ENCODE measurements at regions of chr11 and their contacts with region 1.

Region 1: GRCh38 chr11:61361686-61362541 is at the starts of genes CYB561A3 and TMEM138:
- DNase-seq: peak; percentile 88
- ATAC-seq: peak; percentile 92
- H3K4me3 ChIP-seq: peak within 1 kb of the TSS; percentile 89 to 93
- H3K27ac ChIP-seq: peak within 1 kb of the TSS; percentile 97
- H3K4me1 ChIP-seq: peaks cover 0 to 22% of the 10 kb centered on the region in 2 experiments; a peak in 2 of 4 replicates
- H3K27me3 ChIP-seq: no peaks in the 10 kb centered on the region
- CTCF ChIP-seq: no peak
- POLR2A ChIP-seq: peak; percentile 92
- RAD21 ChIP-seq: no peak
- total RNA-seq, gene CYB561A3: 34.1 TPM
- total RNA-seq, gene TMEM138: 45.0 TPM

Region 2: GRCh38 chr11:61294717-61295595 is 67.0 kb before region 1 on chr11 and contains the start of gene VWCE:
- CTCF ChIA-PET with region 1: no interaction called
- POLR2A ChIA-PET with region 1: no interaction called
- RAD21 ChIA-PET with region 1: no interaction called
- intact Hi-C with region 1: no loop called
- DNase-seq: no peak
- ATAC-seq: peak; percentile 54
- H3K4me3 ChIP-seq: no peak within 1 kb of the TSS
- H3K27ac ChIP-seq: no peak within 1 kb of the TSS
- H3K4me1 ChIP-seq: no peaks in the 10 kb centered on the region
- H3K27me3 ChIP-seq: no peaks in the 10 kb centered on the region
- CTCF ChIP-seq: no peak
- POLR2A ChIP-seq: no peak
- RAD21 ChIP-seq: no peak
- total RNA-seq, gene VWCE: 2.5 TPM

Region 3: DNA sequence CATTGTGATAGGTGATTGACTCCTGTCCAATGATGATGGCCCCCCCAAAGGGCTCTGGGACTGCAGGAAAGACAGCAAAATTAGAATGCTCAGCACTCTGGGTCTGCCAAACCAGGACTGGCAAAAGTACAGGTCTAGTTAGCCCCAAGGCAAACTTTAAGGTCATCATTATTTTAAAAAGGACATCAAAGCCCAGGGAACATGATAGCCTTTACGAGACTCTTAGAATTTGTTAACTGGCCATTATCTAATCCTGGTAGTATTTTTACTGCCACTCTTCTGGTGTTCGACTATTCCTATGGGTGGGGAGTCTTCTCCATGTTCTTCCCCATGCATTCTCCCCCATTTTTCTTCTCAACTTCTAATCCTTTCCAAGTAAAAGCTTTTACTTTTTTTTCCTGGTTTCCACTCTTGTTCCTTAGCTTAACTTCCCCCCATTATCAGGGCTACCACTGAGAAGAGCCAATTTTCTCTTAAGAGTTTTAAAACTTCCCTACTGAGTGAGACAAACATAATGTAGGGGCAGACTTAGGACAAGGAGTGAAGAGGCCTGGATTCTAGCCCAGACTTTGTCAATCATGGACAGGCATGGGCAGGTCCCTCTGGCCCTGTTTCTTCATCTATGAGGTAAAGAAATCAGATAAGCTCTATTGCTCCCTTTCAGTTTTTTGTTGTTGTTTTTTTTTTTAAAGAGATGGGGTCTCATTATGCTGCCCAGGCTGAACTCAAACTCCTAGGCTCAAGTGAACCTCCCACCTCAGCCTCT is 36.1 kb before region 1 on chr11:
- CTCF ChIA-PET with region 1: no interaction called
- POLR2A ChIA-PET with region 1: no interaction called
- RAD21 ChIA-PET with region 1: no interaction called
- intact Hi-C with region 1: no loop called
- DNase-seq: no peak
- ATAC-seq: no peak
- H3K4me3 ChIP-seq: no peak overlapping the region
- H3K27ac ChIP-seq: no peak overlapping the region
- H3K4me1 ChIP-seq: peaks cover 0 to under 1% of the 10 kb centered on the region in 2 experiments; a peak in 1 of 4 replicates
- H3K27me3 ChIP-seq: no peaks in the 10 kb centered on the region
- CTCF ChIP-seq: no peak
- POLR2A ChIP-seq: no peak
- RAD21 ChIP-seq: no peak

Region 4: GRCh38 chr11:61378713-61379313 is 16.9 kb after region 1 on chr11:
- CTCF ChIA-PET with region 1: no interaction called
- POLR2A ChIA-PET with region 1: interaction called, 12 read pairs
- RAD21 ChIA-PET with region 1: no interaction called
- intact Hi-C with region 1: no loop called
- DNase-seq: no peak
- ATAC-seq: no peak
- H3K4me3 ChIP-seq: no peak overlapping the region
- H3K27ac ChIP-seq: no peak overlapping the region
- H3K4me1 ChIP-seq: no peaks in the 10 kb centered on the region
- H3K27me3 ChIP-seq: no peaks in the 10 kb centered on the region
- CTCF ChIP-seq: no peak
- POLR2A ChIP-seq: no peak
- RAD21 ChIP-seq: no peak

Region 5: GRCh38 chr11:61602775-61603569 is 241.1 kb after region 1 on chr11:
- CTCF ChIA-PET with region 1: no interaction called
- POLR2A ChIA-PET with region 1: no interaction called
- RAD21 ChIA-PET with region 1: no interaction called
- intact Hi-C with region 1: no loop called
- DNase-seq: peak; percentile 68
- ATAC-seq: peak; percentile 85
- H3K4me3 ChIP-seq: peak overlapping the region; percentile 20 to 48
- H3K27ac ChIP-seq: peak overlapping the region; percentile 25; the same call in 1 of the 2 replicates
- H3K4me1 ChIP-seq: peaks cover 19 to 55% of the 10 kb centered on the region in 2 experiments
- H3K27me3 ChIP-seq: no peaks in the 10 kb centered on the region
- CTCF ChIP-seq: no peak
- POLR2A ChIP-seq: no peak
- RAD21 ChIP-seq: no peak

Region 6: GRCh38 chr11:62061351-62062222 is 699.7 kb after region 1 on chr11:
- CTCF ChIA-PET with region 1: no interaction called
- POLR2A ChIA-PET with region 1: no interaction called
- RAD21 ChIA-PET with region 1: no interaction called
- intact Hi-C with region 1: no loop called
- DNase-seq: no peak
- ATAC-seq: no peak
- H3K4me3 ChIP-seq: no peak overlapping the region
- H3K27ac ChIP-seq: no peak overlapping the region
- H3K4me1 ChIP-seq: no peaks in the 10 kb centered on the region
- H3K27me3 ChIP-seq: no peaks in the 10 kb centered on the region
- CTCF ChIP-seq: no peak
- POLR2A ChIP-seq: no peak
- RAD21 ChIP-seq: peak; percentile 22; the same call in 1 of the 2 replicates